ENCODE measurements at regions of chr1 and their contacts with region 1.

Region 1: DNA sequence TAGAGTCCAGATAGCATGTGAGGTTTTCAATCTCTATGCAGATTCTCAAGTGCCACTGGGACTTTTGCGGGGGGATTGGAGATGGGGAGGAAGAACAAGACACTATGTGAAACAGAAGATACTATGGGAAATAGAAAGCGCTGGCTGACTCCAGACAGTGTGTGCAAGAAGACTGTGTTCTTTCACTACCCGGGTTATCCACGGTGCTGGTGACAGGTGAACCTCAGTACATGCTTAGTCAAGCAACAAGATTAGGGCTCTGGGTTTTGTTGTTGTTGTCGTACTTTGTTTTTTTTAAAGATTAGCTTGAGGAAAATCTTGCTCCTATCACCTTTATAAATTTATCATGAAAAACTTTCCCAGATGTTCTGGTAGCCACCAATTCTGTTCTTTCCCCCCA is 56.4 kb downstream of the SUSD4 start:
- DNase-seq: no peak
- H3K4me3 ChIP-seq: no peak overlapping the region
- H3K27ac ChIP-seq: no peak overlapping the region
- H3K4me1 ChIP-seq: no peaks in the 10 kb centered on the region
- H3K27me3 ChIP-seq: no peaks in the 10 kb centered on the region
- CTCF ChIP-seq: no peak
- POLR2A ChIP-seq: no peak

Region 2: GRCh38 chr1:223175032-223175431 is 132.5 kb before region 1 on chr1:
- intact Hi-C with region 1: no loop called
- DNase-seq: no peak
- H3K4me3 ChIP-seq: no peak overlapping the region
- H3K27ac ChIP-seq: peak overlapping the region in 1 of 2 donors; percentile 21
- H3K4me1 ChIP-seq: peaks cover 0 to 4% of the 10 kb centered on the region in 2 donors
- H3K27me3 ChIP-seq: no peaks in the 10 kb centered on the region
- CTCF ChIP-seq: no peak
- POLR2A ChIP-seq: no peak

Region 3: DNA sequence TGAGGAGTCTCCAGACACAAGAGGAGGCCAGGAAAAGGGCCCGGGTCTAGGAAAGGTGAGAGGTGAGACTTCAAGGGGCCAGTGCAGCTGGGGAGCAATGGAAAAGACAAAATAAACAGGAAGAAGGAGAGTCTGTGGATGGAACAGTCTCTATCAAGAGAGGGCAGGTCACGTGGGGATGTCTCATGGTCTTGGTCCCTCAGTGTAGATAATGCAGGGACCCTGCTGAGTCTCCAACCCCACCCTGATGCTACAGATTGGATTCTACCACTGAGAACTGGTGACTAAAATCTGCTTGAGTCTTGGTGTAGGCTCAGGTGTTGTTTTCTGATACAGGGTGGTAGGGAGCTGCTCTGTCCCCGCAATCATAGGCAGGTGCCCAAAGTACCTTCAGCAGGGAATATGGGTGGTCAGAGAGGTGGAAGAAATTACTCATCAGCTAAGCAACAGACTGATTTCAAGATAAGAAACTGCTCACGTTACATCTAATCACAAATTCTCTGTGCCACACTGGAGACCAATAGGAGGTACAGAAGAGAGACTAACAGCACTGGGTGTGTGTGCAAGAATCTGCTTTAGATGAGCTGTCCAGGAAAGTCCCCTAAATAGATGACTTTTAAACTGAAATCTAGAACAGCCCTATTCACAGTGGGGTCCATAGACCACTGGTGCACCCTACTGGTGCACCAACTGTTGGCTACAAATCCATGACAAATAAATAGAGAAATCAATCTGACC is 63.0 kb before region 1 on chr1:
- intact Hi-C with region 1: loop called (anchors 2 kb)
- DNase-seq: no peak
- H3K4me3 ChIP-seq: no peak overlapping the region
- H3K27ac ChIP-seq: no peak overlapping the region
- H3K4me1 ChIP-seq: no peaks in the 10 kb centered on the region
- H3K27me3 ChIP-seq: no peaks in the 10 kb centered on the region
- CTCF ChIP-seq: no peak
- POLR2A ChIP-seq: no peak